ENCODE measurements at regions of chr2 and their contacts with region 1.

Region 1: GRCh38 chr2:84925724-84926376 is 20.4 kb downstream of the TMSB10 start:
- DNase-seq: peak; percentile 36
- H3K4me3 ChIP-seq: peak overlapping the region; percentile 37
- H3K27me3 ChIP-seq: no peaks in the 10 kb centered on the region
- CTCF ChIP-seq: peak; percentile 94

Region 2: GRCh38 chr2:84495539-84496146 is 430.2 kb before region 1 on chr2:
- CTCF ChIA-PET with region 1: interaction called, 15 read pairs
- POLR2A ChIA-PET with region 1: no interaction called
- DNase-seq: peak; percentile 26
- H3K4me3 ChIP-seq: no peak overlapping the region
- H3K27me3 ChIP-seq: no peaks in the 10 kb centered on the region
- CTCF ChIP-seq: peak; percentile 53

Region 3: DNA sequence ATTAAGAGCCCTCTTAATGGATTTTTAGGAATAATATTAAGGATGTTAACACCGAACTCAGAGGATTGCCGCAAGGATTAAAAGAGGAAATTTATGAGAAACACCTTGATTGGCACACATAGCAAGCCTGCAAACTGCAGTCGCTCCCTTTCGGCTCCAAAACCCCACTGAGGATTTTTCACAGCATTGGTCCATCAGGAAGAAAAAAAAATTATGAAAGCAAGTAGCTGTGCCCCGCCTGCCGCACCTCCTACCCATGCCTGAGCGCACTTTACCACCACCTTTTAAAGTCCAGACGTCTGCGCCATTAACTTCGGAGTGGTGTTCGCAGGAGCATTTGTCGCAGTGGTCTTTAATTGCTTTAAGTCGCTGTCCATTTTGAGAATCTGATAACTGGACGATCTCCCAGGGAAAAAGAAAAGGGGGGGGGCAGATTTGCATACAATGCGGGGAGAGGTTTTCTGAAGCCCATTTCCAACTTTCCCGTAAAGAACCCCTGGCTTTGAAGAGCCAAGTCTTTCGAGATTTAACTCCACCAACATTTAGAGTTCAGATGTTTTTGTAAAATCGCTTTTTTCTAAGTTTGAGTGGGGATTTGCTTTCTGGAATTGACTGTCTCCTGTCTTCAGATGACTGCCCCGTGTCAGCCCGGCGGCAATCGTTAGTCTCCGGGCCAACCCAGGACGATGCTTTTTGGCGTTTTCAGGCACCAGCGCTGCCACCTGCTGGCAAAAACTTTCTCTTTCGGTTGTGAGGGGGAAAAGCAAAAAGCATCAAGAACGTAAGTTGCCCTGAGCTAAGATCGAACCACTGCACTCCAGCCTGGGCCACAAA is 44.1 kb before region 1 on chr2:
- CTCF ChIA-PET with region 1: interaction called, 18 read pairs
- POLR2A ChIA-PET with region 1: no interaction called
- DNase-seq: no peak
- H3K4me3 ChIP-seq: peak overlapping the region; percentile 44
- H3K27me3 ChIP-seq: peaks cover 9% of the 10 kb centered on the region
- CTCF ChIP-seq: peak; percentile 80

Region 4: DNA sequence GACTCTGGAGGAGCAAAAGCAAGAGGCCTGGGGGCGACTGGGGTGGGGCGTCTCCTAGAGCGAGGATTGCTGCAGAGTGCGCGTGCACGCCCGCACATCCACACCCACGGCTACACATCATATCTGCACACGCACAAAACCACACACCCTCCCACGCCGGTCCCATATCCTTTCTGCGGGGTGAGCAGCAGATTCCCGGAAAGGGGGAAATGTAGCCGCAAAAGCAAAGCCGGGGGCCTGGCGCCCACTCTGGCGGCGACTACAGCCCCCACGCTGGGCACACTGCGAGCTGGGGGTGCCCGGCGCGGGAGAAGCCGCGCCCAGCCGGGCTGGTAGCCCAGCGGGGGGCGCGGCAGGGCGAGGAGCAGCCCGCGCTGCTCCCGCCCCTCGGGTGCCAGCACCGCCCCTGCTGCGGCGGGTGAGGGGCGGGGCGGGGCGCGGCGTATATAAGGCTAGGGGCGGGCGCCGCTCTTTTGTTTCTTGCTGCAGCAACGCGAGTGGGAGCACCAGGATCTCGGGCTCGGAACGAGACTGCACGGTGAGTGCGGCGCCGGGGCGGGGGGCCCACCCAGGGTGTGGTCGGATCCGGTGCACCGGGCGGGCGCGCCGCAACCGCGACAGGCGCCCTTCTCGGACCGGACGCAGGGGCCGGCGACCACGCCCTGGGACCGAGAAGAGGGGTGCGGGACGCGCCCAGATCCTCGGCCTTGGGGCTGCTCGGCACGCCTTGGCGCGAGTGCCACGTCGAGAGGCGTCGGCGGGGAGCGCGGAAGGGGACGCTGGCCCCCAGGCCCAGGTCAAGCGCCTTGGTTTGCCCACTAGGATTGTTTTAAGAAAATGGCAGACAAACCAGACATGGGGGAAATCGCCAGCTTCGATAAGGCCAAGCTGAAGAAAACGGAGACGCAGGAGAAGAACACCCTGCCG is 20.4 kb before region 1 on chr2 and contains the start of gene TMSB10:
- CTCF ChIA-PET with region 1: interaction called, 30 read pairs
- POLR2A ChIA-PET with region 1: no interaction called
- DNase-seq: no peak
- H3K4me3 ChIP-seq: peak within 1 kb of the TSS; percentile 80
- H3K27me3 ChIP-seq: no peaks in the 10 kb centered on the region
- CTCF ChIP-seq: no peak
- polyA plus RNA-seq, gene TMSB10: 2,234 and 3,073 TPM in 2 replicates

Region 5: GRCh38 chr2:84946204-84947009 is 20.6 kb after region 1 on chr2:
- CTCF ChIA-PET with region 1: interaction called, 106 read pairs
- POLR2A ChIA-PET with region 1: no interaction called
- DNase-seq: peak; percentile 74
- H3K4me3 ChIP-seq: no peak overlapping the region
- H3K27me3 ChIP-seq: no peaks in the 10 kb centered on the region
- CTCF ChIP-seq: no peak

Region 6: GRCh38 chr2:84991404-84992151 is 65.7 kb after region 1 on chr2:
- CTCF ChIA-PET with region 1: interaction called, 17 read pairs
- POLR2A ChIA-PET with region 1: no interaction called
- DNase-seq: peak; percentile 100
- H3K4me3 ChIP-seq: no peak overlapping the region
- H3K27me3 ChIP-seq: no peaks in the 10 kb centered on the region
- CTCF ChIP-seq: no peak

Region 7: GRCh38 chr2:85066874-85067351 is 141.1 kb after region 1 on chr2:
- CTCF ChIA-PET with region 1: interaction called, 15 read pairs
- POLR2A ChIA-PET with region 1: no interaction called
- DNase-seq: peak; percentile 9
- H3K4me3 ChIP-seq: no peak overlapping the region; the same call in 1 of the 2 replicates
- H3K27me3 ChIP-seq: peaks cover 4% of the 10 kb centered on the region; the same call in 1 of the 2 replicates
- CTCF ChIP-seq: peak; percentile 87